Gastrocnemius medialis (tissue), 4 donors: ENCODE measurements at regions of chr20 and their contacts with region 1.

Region 1: GRCh38 chr20:37095599-37096414 is at the start of gene RBL1:
- DNase-seq: peak; percentile 60 to 68
- ATAC-seq: peak; percentile 67 to 81
- H3K4me3 ChIP-seq: peak within 1 kb of the TSS; percentile 76 to 98 (median 78)
- H3K27ac ChIP-seq: peak within 1 kb of the TSS; percentile 77 to 83 (median 80)
- H3K4me1 ChIP-seq: peaks cover 18 to 24% of the 10 kb centered on the region in 2 donors
- H3K27me3 ChIP-seq: no peaks in the 10 kb centered on the region
- CTCF ChIP-seq: peak in 4 of 5 experiments; percentile 16 to 57 (median 46)
- POLR2A ChIP-seq: peak; percentile 42 to 45
- total RNA-seq, gene RBL1: 2.9 to 13.0 (median 6.1) TPM

Region 2: DNA sequence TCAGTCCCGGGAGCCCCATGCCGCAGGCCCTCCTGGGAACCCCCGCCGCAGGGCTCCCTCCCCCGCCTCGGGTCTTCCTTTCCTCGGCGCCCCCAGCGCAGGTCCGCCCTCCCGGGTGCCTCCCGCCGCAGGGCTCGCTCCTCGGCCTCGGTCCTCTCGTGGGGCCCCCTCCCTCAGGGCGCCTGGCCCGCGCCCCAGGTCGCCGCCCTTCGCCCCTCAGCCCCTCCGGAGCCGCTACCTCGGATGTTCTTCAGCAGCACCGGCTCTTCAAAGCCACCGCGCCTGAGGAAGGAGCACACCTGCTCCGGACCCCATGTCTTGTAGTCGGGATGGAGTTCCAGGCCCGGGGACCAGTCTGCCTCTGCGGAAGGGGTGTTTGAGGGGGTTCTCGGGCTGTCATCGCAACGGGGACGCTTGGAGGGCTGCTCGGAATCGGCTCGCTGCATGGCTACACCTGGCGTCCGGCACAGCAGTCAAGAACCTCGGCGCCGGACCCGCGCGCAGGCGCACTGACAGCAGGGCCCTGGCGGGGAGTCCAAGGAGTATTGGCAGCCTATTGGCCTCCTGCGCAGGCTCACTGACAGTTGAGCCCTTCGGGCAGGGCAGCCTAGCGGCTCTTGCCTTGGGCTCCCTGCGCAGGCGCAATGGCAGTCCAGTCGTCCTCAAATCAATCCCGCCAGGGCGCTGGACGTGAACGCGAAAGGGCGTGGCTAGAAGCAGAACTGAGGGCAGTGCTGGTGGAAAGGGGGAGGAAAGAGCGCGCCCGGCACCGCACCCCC is 144.4 kb before region 1 on chr20 and contains the start of gene SAMHD1:
- in situ Hi-C with region 1: no loop called
- intact Hi-C with region 1: loop called (anchors 5 kb)
- DNase-seq: peak; percentile 97 to 98
- ATAC-seq: peak; percentile 96 to 97
- H3K4me3 ChIP-seq: peak within 1 kb of the TSS; percentile 89 to 100 (median 98)
- H3K27ac ChIP-seq: peak within 1 kb of the TSS; percentile 81 to 98 (median 91)
- H3K4me1 ChIP-seq: peaks cover 13 to 32% of the 10 kb centered on the region in 2 donors
- H3K27me3 ChIP-seq: no peaks in the 10 kb centered on the region
- CTCF ChIP-seq: peak in 3 of 5 experiments; percentile 12 to 37 (median 16)
- POLR2A ChIP-seq: peak; percentile 82 to 86
- total RNA-seq, gene SAMHD1: 37.5 to 84.1 (median 69.4) TPM

Region 3: GRCh38 chr20:37071481-37071911 is 24.3 kb before region 1 on chr20:
- in situ Hi-C with region 1: no loop called
- intact Hi-C with region 1: no loop called
- DNase-seq: peak in 1 of 2 donors; percentile 14
- ATAC-seq: peak in 1 of 2 donors; percentile 46
- H3K4me3 ChIP-seq: no peak overlapping the region
- H3K27ac ChIP-seq: no peak overlapping the region
- H3K4me1 ChIP-seq: no peaks in the 10 kb centered on the region
- H3K27me3 ChIP-seq: no peaks in the 10 kb centered on the region
- CTCF ChIP-seq: no peak
- POLR2A ChIP-seq: no peak

Region 4: DNA sequence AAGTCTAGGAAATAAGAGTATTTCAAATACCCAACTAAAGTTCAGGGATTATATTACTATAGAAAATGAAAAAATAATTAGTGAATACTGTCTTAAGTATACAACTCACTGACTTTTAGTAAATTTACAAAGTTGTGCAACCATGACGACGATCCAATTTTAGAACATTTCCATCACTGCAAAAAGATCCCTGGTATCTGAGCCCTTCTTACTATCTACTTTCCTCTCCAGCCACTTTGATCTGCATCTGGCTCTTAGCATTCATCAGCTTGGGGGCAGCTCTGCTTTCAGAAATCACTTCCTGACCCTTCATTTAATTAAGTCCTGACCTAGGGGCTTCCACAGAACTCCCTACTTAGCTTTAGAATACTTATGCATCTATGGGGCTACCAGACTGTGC is 38.1 kb after region 1 on chr20:
- in situ Hi-C with region 1: no loop called
- intact Hi-C with region 1: no loop called
- DNase-seq: no peak
- ATAC-seq: no peak
- H3K4me3 ChIP-seq: no peak overlapping the region
- H3K27ac ChIP-seq: no peak overlapping the region
- H3K4me1 ChIP-seq: no peaks in the 10 kb centered on the region
- H3K27me3 ChIP-seq: no peaks in the 10 kb centered on the region
- CTCF ChIP-seq: no peak
- POLR2A ChIP-seq: no peak

Region 5: GRCh38 chr20:37178839-37179670 is 83.2 kb after region 1 on chr20 and contains the starts of genes MROH8 and RPN2:
- in situ Hi-C with region 1: no loop called
- intact Hi-C with region 1: loop called (anchors 2 kb)
- DNase-seq: peak; percentile 97 to 98
- ATAC-seq: peak; percentile 86 to 90
- H3K4me3 ChIP-seq: peak within 1 kb of the TSS; percentile 69 to 95 (median 84)
- H3K27ac ChIP-seq: peak within 1 kb of the TSS; percentile 94 to 98 (median 98)
- H3K4me1 ChIP-seq: peaks cover 30 to 38% of the 10 kb centered on the region in 2 donors
- H3K27me3 ChIP-seq: no peaks in the 10 kb centered on the region
- CTCF ChIP-seq: peak in 1 of 5 experiments; percentile 13
- POLR2A ChIP-seq: peak; percentile 81 to 93
- total RNA-seq, gene MROH8: 1.4 to 4.4 (median 3.0) TPM
- total RNA-seq, gene RPN2: 85.7 to 132 (median 127) TPM